Adrenal gland (tissue), 19 donors: ENCODE measurements at regions of chr15 and their contacts with region 1.

Region 1: DNA sequence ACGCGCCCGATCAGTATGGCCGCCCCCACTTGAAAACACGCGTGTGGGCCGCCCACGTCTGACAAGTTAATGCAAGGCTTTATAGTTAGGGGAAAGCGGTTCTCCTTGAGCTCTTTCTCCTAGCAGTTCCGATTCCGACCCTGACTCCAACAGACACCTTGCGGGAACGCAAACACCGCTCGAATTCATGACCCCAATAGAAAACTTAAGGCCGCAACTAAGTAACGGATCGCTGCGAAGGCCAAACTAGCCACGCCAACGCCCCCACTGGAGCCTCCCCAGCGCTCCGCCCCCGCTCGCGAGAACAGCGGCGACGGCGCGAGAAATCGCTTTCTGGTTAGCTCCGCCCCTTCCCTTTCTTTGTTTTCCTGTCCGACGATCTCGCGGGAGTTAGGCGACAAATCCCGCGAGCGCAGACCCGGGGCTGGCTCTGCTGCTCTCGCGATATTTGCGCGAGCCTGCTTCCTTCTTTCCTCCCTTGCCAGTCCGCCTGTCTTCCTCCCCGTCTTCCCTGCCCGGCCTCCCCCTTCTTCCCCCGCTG is at the start of gene IREB2:
- DNase-seq: peak; percentile 97 to 99 (median 98)
- H3K4me3 ChIP-seq: peak within 1 kb of the TSS; percentile 86 to 100 (median 98)
- H3K27ac ChIP-seq: peak within 1 kb of the TSS; percentile 83 to 98 (median 92)
- H3K4me1 ChIP-seq: peaks cover 43 to 47% of the 10 kb centered on the region in 2 donors
- H3K27me3 ChIP-seq: no peaks in the 10 kb centered on the region
- CTCF ChIP-seq: no peak
- POLR2A ChIP-seq: peak in 1 of 2 donors; percentile 66
- total RNA-seq, gene IREB2: 54.8 to 148 (median 89.8) TPM

Region 2: GRCh38 chr15:78382114-78382880 is 55.5 kb before region 1 on chr15:
- intact Hi-C with region 1: no loop called
- DNase-seq: no peak
- H3K4me3 ChIP-seq: no peak overlapping the region
- H3K27ac ChIP-seq: no peak overlapping the region
- H3K4me1 ChIP-seq: no peaks in the 10 kb centered on the region
- H3K27me3 ChIP-seq: peaks cover 13% of the 10 kb centered on the region
- CTCF ChIP-seq: no peak
- POLR2A ChIP-seq: no peak

Region 3: DNA sequence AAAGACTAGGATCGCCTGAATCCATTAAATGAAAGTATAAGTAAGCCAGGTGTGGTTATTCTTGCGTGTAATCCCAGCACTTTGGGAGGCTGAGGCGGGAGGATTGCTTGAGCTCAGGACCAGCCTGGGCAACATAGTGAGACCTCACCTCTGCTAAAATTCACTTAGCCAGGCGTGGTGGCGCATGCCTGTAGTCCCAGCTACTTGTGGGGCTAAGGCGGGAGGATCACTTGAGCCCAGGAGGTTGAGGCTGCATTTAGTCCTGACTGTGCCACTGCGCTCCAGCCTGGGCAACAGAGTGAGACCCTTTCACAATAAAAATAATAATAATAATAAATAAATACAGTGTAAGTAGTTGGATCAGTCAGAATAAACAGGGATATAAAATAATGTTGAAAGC is 44.1 kb after region 1 on chr15:
- intact Hi-C with region 1: loop called in 1 of 2 experiments (anchors 5 kb)
- DNase-seq: peak in 1 of 7 donors; percentile 25
- H3K4me3 ChIP-seq: no peak overlapping the region
- H3K27ac ChIP-seq: peak overlapping the region in 2 of 5 donors; percentile 10 to 28
- H3K4me1 ChIP-seq: peaks cover 6 to 19% of the 10 kb centered on the region in 2 donors
- H3K27me3 ChIP-seq: no peaks in the 10 kb centered on the region
- CTCF ChIP-seq: no peak
- POLR2A ChIP-seq: no peak